CD4-positive, alpha-beta T cell (primary cell): ENCODE measurements at regions of chr17 and their contacts with region 1.

Region 1: DNA sequence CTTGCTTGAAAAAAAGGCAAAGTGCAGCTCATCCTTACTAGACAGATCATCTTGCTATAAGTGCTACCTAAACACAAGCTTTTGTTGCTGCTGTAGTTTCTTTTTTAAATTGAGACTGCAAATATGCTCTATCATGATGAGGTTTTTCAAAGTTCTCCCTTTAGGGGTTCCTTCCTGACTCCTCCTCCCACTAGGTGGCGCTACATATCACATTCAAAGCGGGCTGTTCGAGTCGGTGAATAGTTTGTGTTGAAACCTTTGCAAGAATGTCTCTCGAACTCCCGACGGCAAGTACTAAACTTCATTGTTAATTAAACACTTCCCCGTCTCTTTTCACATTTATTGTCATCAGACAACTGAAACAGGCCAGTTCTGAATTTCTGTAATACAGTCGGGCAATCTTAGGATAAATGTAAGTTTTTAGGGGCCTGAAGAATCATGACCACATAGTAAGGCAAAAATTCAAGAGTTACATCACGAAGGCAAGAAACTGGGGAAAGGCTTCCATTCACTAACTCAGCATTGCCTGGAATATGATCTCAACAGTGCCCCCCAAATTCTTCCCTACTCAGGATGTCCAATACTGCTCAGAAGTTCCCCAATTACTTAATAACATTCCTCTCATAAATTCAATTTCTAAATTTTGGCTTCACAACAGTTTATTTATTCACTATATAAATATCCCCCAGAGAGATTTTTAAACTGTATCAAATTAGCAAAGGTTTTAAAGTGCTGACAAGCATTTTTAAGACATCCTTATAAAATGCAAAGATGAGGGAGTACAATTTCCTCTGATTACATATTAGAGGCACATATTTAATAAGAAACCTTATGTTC is 6.7 kb downstream of the HS3ST3A1 start:
- DNase-seq: peak; percentile 62 to 89 (median 78)
- ATAC-seq: peak; percentile 82
- H3K4me3 ChIP-seq: no peak overlapping the region
- H3K4me3 Mint-ChIP-seq: no peak overlapping the region
- H3K27ac ChIP-seq: no peak overlapping the region
- H3K27ac Mint-ChIP-seq: no peak overlapping the region
- H3K4me1 ChIP-seq: no peaks in the 10 kb centered on the region
- H3K4me1 Mint-ChIP-seq: peaks cover 6% of the 10 kb centered on the region
- H3K27me3 ChIP-seq: peaks cover 7 to 21% of the 10 kb centered on the region in 2 experiments
- H3K27me3 Mint-ChIP-seq: peaks cover 39% of the 10 kb centered on the region
- CTCF ChIP-seq: peak; percentile 85

Region 2: GRCh38 chr17:13031718-13032350 is 563.1 kb before region 1 on chr17:
- CTCF ChIA-PET with region 1: no interaction called
- POLR2A ChIA-PET with region 1: interaction called, 3 read pairs
- intact Hi-C with region 1: loop called in 1 of 2 experiments (anchors 10 kb)
- DNase-seq: peak; percentile 15 to 77 (median 32)
- ATAC-seq: peak; percentile 76
- H3K4me3 ChIP-seq: no peak overlapping the region
- H3K4me3 Mint-ChIP-seq: no peak overlapping the region
- H3K27ac ChIP-seq: no peak overlapping the region
- H3K27ac Mint-ChIP-seq: peak overlapping the region; percentile 19
- H3K4me1 ChIP-seq: peaks cover 13% of the 10 kb centered on the region
- H3K4me1 Mint-ChIP-seq: peaks cover 13% of the 10 kb centered on the region
- H3K27me3 ChIP-seq: no peaks in the 10 kb centered on the region
- H3K27me3 Mint-ChIP-seq: peaks cover 6% of the 10 kb centered on the region
- CTCF ChIP-seq: peak; percentile 81

Region 3: DNA sequence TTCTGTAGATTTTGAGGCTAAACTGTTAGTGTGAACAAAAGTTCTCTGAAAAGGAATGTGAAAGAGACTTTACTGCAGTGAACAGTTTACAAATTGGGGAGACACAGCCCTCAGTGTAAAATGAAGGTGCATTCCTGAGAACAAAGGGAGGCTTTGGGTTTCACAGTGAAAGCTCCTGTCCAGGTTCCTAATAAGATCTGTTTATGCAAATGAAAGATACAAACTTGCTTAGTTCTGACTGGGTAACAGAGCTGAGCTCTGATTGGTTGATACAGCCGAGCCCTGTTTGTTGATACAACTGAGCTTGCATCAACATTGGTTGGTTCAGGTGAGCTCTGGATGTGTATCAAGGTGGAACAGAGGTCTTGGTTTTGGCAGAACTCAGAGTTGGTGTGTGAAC is 650.0 kb after region 1 on chr17:
- CTCF ChIA-PET with region 1: no interaction called
- POLR2A ChIA-PET with region 1: no interaction called
- intact Hi-C with region 1: loop called in 1 of 2 experiments (anchors 5 kb)
- DNase-seq: no peak
- ATAC-seq: no peak
- H3K4me3 ChIP-seq: no peak overlapping the region
- H3K4me3 Mint-ChIP-seq: no peak overlapping the region
- H3K27ac ChIP-seq: no peak overlapping the region
- H3K27ac Mint-ChIP-seq: no peak overlapping the region
- H3K4me1 ChIP-seq: no peaks in the 10 kb centered on the region
- H3K4me1 Mint-ChIP-seq: no peaks in the 10 kb centered on the region
- H3K27me3 ChIP-seq: no peaks in the 10 kb centered on the region
- H3K27me3 Mint-ChIP-seq: no peaks in the 10 kb centered on the region
- CTCF ChIP-seq: no peak

Region 4: GRCh38 chr17:14784997-14785696 is 1190.2 kb after region 1 on chr17:
- CTCF ChIA-PET with region 1: interaction called, 5 read pairs
- POLR2A ChIA-PET with region 1: no interaction called
- intact Hi-C with region 1: loop called (anchors 1 to 2 kb)
- DNase-seq: peak in 13 of 14 experiments; percentile 2 to 62 (median 30)
- ATAC-seq: peak; percentile 69
- H3K4me3 ChIP-seq: no peak overlapping the region
- H3K4me3 Mint-ChIP-seq: no peak overlapping the region
- H3K27ac ChIP-seq: no peak overlapping the region
- H3K27ac Mint-ChIP-seq: no peak overlapping the region
- H3K4me1 ChIP-seq: no peaks in the 10 kb centered on the region
- H3K4me1 Mint-ChIP-seq: no peaks in the 10 kb centered on the region
- H3K27me3 ChIP-seq: no peaks in the 10 kb centered on the region
- H3K27me3 Mint-ChIP-seq: peaks cover 11% of the 10 kb centered on the region
- CTCF ChIP-seq: peak; percentile 13

Region 5: DNA sequence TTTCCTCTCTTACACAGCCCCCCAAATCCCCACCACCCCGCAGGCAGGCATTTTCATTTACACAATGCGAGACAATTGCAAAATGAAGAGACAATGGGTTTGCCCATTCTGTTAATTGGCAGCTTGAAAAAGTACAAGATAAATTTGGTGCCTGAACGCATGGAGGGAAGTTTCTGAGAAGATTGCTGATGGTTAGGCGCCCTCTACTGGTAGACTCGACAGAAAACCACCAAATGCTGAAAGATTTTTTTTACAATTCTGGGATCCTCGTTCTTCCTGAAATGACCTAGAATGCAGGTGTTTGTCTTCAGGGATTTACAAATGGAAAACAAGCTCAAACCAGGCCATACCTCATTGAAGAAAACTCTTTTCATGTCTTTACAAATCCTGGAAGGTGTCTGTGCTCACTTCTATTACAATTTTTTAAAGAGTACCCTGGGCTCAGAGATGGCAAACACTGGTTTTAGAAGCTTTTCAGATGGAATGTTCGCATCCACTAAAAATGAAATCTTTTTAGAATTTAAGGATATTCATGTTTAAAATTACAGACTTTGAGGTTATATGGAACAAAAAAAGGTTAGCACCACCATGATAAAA is 1331.6 kb after region 1 on chr17:
- CTCF ChIA-PET with region 1: interaction called, 5 read pairs
- POLR2A ChIA-PET with region 1: no interaction called
- intact Hi-C with region 1: loop called (anchors 1 kb)
- DNase-seq: peak in 13 of 14 experiments; percentile 20 to 82 (median 42)
- ATAC-seq: no peak
- H3K4me3 ChIP-seq: no peak overlapping the region
- H3K4me3 Mint-ChIP-seq: no peak overlapping the region
- H3K27ac ChIP-seq: no peak overlapping the region
- H3K27ac Mint-ChIP-seq: no peak overlapping the region
- H3K4me1 ChIP-seq: no peaks in the 10 kb centered on the region
- H3K4me1 Mint-ChIP-seq: no peaks in the 10 kb centered on the region
- H3K27me3 ChIP-seq: peaks cover 5 to 10% of the 10 kb centered on the region in 2 experiments
- H3K27me3 Mint-ChIP-seq: peaks cover 22% of the 10 kb centered on the region
- CTCF ChIP-seq: peak; percentile 85